ENCODE measurements at regions of chr2 and their contacts with region 1.

Region 1: DNA sequence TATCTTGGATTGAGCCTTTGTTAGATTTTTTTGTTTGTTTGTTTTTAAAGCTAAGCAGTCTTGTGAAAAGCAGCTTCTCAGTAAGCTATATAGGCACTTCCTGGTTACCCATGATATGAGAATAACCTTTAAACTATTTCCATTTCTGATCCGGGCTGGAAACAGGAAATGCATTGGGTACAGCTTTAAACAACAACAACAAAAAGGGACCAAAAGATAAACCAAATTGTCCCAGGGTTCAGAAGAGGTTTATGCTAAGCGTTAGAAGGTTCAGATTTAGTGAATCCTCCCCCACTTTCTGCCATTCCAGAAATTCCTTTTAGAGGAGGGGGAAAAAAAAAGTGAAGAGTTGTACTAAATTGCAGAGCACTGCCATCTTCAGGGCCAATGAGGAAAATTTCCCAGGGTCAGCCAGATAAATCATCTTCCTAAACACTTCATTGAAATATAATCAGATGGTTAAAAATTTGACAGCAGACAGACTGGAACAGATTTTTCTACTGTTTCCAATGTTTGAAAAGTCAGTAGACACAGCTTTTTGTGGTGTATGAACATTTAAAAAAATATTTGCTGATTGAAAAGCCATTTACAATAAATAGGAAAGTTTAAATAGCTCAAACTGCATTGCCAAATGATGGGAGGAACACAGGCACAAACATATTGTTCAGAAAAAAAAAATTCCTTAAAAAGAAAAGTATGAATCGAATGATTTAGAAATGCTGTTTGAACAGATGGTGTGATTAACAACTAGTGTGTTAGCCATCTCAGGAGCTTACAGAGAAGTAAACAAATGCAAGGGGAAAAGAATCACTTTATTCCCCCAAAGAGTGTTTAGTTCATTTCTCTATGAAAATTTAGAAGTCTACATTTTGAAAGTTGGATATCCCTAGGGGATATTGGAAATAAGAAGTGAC is 189.9 kb upstream of the TANK start:
- DNase-seq: peak in 1 of 2 donors; percentile 57
- ATAC-seq: peak; percentile 32 to 81 (median 74)
- H3K4me3 ChIP-seq: peak overlapping the region in 7 of 10 donors; percentile 9 to 40 (median 32)
- H3K27ac ChIP-seq: peak overlapping the region in 9 of 10 donors; percentile 14 to 75 (median 68)
- H3K4me1 ChIP-seq: peaks cover 0 to 24% (median 13%) of the 10 kb centered on the region in 9 donors
- H3K27me3 ChIP-seq: no peaks in the 10 kb centered on the region
- CTCF ChIP-seq: peak; percentile 49 to 86 (median 80)

Region 2: DNA sequence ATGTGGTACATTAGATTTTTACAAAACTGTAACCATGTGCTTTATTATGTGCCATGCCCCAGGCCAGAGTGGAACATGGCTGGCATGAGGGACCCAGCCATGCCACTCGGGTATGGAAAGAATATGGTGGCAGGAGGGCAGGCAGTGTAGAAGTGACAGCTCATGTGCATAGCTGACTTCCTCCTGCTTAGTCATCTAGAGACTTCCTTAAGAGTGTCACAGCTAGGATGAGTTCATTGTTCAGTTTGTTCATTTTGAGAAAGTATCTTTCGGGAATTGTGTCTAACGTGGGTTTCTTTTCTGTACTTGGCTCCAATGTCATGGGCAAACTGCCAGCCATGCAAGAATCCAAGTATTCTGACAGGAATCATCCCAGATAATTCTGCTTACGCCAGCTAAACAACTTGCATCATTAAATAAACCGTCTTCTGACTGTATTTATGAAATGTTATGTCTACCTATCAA is 675.9 kb before region 1 on chr2:
- intact Hi-C with region 1: loop called in 1 of 10 experiments (anchors 10 kb)
- DNase-seq: peak in 1 of 2 donors; percentile 66
- ATAC-seq: peak; percentile 61 to 92 (median 73)
- H3K4me3 ChIP-seq: no peak overlapping the region
- H3K27ac ChIP-seq: peak overlapping the region in 8 of 10 donors; percentile 16 to 73 (median 54)
- H3K4me1 ChIP-seq: peaks cover 3 to 86% (median 74%) of the 10 kb centered on the region in 9 donors
- H3K27me3 ChIP-seq: no peaks in the 10 kb centered on the region
- CTCF ChIP-seq: no peak

Region 3: GRCh38 chr2:160324161-160324800 is 646.0 kb before region 1 on chr2:
- intact Hi-C with region 1: loop called in 6 of 10 experiments (anchors 2 to 10 kb)
- DNase-seq: peak; percentile 51 to 67
- ATAC-seq: peak in 7 of 8 donors; percentile 31 to 62 (median 40)
- H3K4me3 ChIP-seq: no peak overlapping the region
- H3K27ac ChIP-seq: peak overlapping the region in 3 of 10 donors; percentile 9 to 82 (median 36)
- H3K4me1 ChIP-seq: peaks cover 0 to 97% (median 77%) of the 10 kb centered on the region in 9 donors
- H3K27me3 ChIP-seq: no peaks in the 10 kb centered on the region
- CTCF ChIP-seq: peak; percentile 47 to 85 (median 73)

Region 4: DNA sequence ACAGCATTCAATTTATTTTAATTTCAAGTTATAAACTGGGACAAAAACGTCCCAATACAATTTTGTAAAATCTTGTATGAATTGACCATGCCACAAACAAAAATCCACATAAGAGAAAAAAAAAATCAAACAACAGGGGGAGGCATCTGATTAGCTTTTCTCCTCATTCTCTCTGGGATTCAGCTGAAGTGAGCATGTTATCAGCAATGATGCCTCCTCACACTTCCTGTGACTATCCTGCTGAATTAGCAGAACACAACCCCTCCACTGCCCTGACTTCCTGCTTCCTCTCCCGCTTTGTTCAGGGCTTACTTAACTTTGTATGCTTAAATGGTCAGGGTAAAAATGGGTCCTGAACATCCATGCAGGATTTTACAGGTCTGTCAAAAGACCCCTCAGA is 638.0 kb before region 1 on chr2:
- intact Hi-C with region 1: loop called in 6 of 10 experiments (anchors 5 to 10 kb)
- DNase-seq: peak in 1 of 2 donors; percentile 37
- ATAC-seq: peak in 7 of 8 donors; percentile 39 to 81 (median 45)
- H3K4me3 ChIP-seq: no peak overlapping the region
- H3K27ac ChIP-seq: peak overlapping the region in 3 of 10 donors; percentile 56 to 82 (median 67)
- H3K4me1 ChIP-seq: peaks cover 5 to 100% (median 95%) of the 10 kb centered on the region in 9 donors
- H3K27me3 ChIP-seq: no peaks in the 10 kb centered on the region
- CTCF ChIP-seq: peak in 5 of 9 donors; percentile 10 to 41 (median 25)

Region 5: GRCh38 chr2:160906878-160907277 is 63.4 kb before region 1 on chr2:
- intact Hi-C with region 1: no loop called
- DNase-seq: no peak
- ATAC-seq: no peak
- H3K4me3 ChIP-seq: no peak overlapping the region
- H3K27ac ChIP-seq: no peak overlapping the region
- H3K4me1 ChIP-seq: peaks cover 0 to 54% (median 18%) of the 10 kb centered on the region in 9 donors
- H3K27me3 ChIP-seq: no peaks in the 10 kb centered on the region
- CTCF ChIP-seq: no peak

Measured in heart right ventricle (tissue), 16 donors.